ENCODE measurements at regions of chr6 and their contacts with region 1.

Region 1: GRCh38 chr6:137641474-137642077 is 147.4 kb upstream of the OLIG3 start:
- DNase-seq: peak; percentile 41 to 83 (median 64)
- ATAC-seq: peak; percentile 74
- H3K4me3 ChIP-seq: no peak overlapping the region
- H3K4me3 Mint-ChIP-seq: no peak overlapping the region
- H3K27ac ChIP-seq: no peak overlapping the region
- H3K27ac Mint-ChIP-seq: no peak overlapping the region
- H3K4me1 ChIP-seq: no peaks in the 10 kb centered on the region
- H3K4me1 Mint-ChIP-seq: peaks cover 13% of the 10 kb centered on the region
- H3K27me3 ChIP-seq: no peaks in the 10 kb centered on the region
- H3K27me3 Mint-ChIP-seq: peaks cover 2% of the 10 kb centered on the region
- CTCF ChIP-seq: peak; percentile 77

Region 2: DNA sequence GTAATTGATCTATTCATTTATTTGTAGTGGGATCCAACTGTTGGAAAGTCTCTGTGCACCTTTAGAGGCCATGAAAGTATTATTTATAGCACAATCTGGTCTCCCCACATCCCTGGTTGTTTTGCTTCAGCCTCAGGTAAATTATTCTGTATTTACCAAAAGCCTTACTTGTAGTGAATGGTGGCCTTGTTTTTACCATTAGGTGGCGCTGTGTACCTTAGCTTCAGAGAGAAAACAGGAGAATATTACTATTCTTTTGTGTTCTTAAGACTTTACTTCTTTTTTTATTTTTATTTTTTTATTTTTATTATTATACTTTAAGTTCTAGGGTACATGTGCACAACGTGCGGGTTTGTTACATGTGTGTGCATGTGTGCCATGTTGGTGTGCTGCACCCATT is 795.5 kb before region 1 on chr6:
- CTCF ChIA-PET with region 1: no interaction called
- POLR2A ChIA-PET with region 1: no interaction called
- intact Hi-C with region 1: loop called in 1 of 2 experiments (anchors 10 kb)
- DNase-seq: peak in 4 of 9 experiments; percentile 18 to 67 (median 39)
- ATAC-seq: peak; percentile 46
- H3K4me3 ChIP-seq: no peak overlapping the region
- H3K4me3 Mint-ChIP-seq: no peak overlapping the region
- H3K27ac ChIP-seq: no peak overlapping the region
- H3K27ac Mint-ChIP-seq: no peak overlapping the region
- H3K4me1 ChIP-seq: no peaks in the 10 kb centered on the region
- H3K4me1 Mint-ChIP-seq: peaks cover 3% of the 10 kb centered on the region
- H3K27me3 ChIP-seq: no peaks in the 10 kb centered on the region
- H3K27me3 Mint-ChIP-seq: no peaks in the 10 kb centered on the region
- CTCF ChIP-seq: peak; percentile 63

Region 3: GRCh38 chr6:136967876-136968752 is 673.5 kb before region 1 on chr6:
- CTCF ChIA-PET with region 1: no interaction called
- POLR2A ChIA-PET with region 1: no interaction called
- intact Hi-C with region 1: loop called in 1 of 2 experiments (anchors 1 kb)
- DNase-seq: peak; percentile 19 to 74 (median 60)
- ATAC-seq: peak; percentile 61
- H3K4me3 ChIP-seq: no peak overlapping the region
- H3K4me3 Mint-ChIP-seq: no peak overlapping the region
- H3K27ac ChIP-seq: no peak overlapping the region
- H3K27ac Mint-ChIP-seq: no peak overlapping the region
- H3K4me1 ChIP-seq: peaks cover 4% of the 10 kb centered on the region
- H3K4me1 Mint-ChIP-seq: no peaks in the 10 kb centered on the region
- H3K27me3 ChIP-seq: no peaks in the 10 kb centered on the region
- H3K27me3 Mint-ChIP-seq: peaks cover 32% of the 10 kb centered on the region
- CTCF ChIP-seq: peak; percentile 59

Region 4: DNA sequence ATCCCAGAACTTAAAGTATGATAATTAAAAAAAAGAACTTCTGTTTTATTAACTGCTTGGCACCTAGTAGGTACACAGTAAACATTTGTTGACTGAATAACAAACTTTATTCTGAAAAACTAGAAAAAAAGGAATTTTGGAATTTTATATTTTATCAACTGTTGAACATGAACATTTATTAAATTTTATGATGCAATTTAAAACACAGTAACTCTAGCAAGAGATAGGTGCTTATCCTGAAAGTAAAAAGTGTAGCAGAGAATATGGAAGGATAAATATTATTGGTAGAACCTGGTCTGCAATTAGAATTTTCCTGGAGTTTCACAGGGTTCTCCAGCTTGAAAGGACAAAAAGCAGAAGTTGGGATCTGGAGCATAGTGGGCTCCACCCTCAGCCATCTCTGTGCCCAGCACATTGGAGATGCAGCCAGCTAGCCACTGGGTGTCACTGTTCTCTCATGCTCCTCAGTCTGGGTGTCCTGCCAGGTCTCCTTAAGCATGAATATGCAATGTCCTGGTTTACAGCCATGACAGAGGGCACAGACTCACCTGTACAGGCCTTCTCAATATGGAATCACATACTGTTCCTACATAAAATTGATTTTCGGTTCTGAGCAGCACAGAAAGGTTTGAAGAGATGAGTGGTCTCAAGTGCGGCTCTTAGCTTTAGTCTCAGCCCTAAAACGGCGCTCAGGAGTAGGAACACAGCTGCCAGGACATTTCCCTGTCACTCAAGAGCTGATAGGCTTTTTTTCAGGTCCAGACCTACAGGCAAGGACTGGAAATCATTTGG is 565.1 kb before region 1 on chr6:
- CTCF ChIA-PET with region 1: interaction called, 5 read pairs
- POLR2A ChIA-PET with region 1: no interaction called
- intact Hi-C with region 1: loop called (anchors 1 to 2 kb)
- DNase-seq: peak; percentile 22 to 71 (median 47)
- ATAC-seq: peak; percentile 62
- H3K4me3 ChIP-seq: no peak overlapping the region
- H3K4me3 Mint-ChIP-seq: no peak overlapping the region
- H3K27ac ChIP-seq: no peak overlapping the region
- H3K27ac Mint-ChIP-seq: no peak overlapping the region
- H3K4me1 ChIP-seq: no peaks in the 10 kb centered on the region
- H3K4me1 Mint-ChIP-seq: no peaks in the 10 kb centered on the region
- H3K27me3 ChIP-seq: no peaks in the 10 kb centered on the region
- H3K27me3 Mint-ChIP-seq: peaks cover 16% of the 10 kb centered on the region
- CTCF ChIP-seq: peak; percentile 57

Region 5: GRCh38 chr6:137094411-137095008 is 547.1 kb before region 1 on chr6:
- CTCF ChIA-PET with region 1: interaction called, 5 read pairs
- POLR2A ChIA-PET with region 1: no interaction called
- intact Hi-C with region 1: loop called (anchors 1 kb)
- DNase-seq: peak; percentile 14 to 79 (median 54)
- ATAC-seq: peak; percentile 67
- H3K4me3 ChIP-seq: no peak overlapping the region
- H3K4me3 Mint-ChIP-seq: no peak overlapping the region
- H3K27ac ChIP-seq: no peak overlapping the region
- H3K27ac Mint-ChIP-seq: peak overlapping the region; percentile 37
- H3K4me1 ChIP-seq: no peaks in the 10 kb centered on the region
- H3K4me1 Mint-ChIP-seq: peaks cover 18% of the 10 kb centered on the region
- H3K27me3 ChIP-seq: no peaks in the 10 kb centered on the region
- H3K27me3 Mint-ChIP-seq: peaks cover 3% of the 10 kb centered on the region
- CTCF ChIP-seq: peak; percentile 71

Region 6: DNA sequence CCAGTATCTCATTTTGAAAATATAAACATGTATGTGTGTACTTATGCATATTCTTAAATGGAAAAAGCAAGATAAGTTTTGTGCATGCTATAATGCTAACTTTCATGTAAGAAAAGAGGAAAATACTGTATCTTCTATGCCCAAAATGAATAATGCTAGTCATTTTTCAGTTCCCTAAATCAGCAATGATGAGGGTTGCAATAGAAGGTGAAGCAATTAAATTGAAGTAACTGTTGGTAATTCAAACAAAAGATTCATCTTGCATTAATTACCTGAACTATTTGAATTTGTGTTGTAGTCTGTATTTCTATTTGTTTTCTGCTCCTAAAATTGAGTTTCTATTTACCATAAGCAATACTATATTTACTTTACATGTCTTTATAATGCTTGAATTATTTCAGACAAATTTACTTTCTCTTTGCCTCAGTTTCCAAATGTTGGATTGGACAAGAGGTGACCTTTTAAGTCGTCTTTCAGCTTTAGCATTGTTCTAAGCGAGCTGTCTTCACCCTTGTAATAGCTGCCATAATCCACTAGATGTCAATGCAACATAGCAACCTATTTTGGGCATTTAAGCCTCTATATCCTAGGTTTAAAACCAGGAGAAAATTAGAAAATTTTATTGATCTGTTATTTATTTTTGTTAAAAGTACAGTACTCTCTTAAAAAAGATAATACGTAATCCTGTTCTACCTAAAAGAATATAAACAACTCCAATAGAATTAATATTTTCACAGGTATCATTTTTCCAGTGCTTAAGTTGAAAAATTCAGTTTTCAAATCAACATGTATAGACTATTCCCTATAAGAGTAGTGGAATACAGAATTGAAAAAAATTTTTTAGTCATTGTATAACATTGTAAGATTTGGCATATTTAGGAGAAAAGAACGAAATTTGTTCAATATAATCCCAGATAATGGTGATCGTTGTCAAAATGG is 370.1 kb before region 1 on chr6:
- CTCF ChIA-PET with region 1: interaction called, 17 read pairs
- POLR2A ChIA-PET with region 1: no interaction called
- intact Hi-C with region 1: loop called (anchors 1 kb)
- DNase-seq: peak in 2 of 9 experiments; percentile 56 to 66
- ATAC-seq: peak; percentile 69
- H3K4me3 ChIP-seq: no peak overlapping the region
- H3K4me3 Mint-ChIP-seq: no peak overlapping the region
- H3K27ac ChIP-seq: no peak overlapping the region
- H3K27ac Mint-ChIP-seq: no peak overlapping the region
- H3K4me1 ChIP-seq: no peaks in the 10 kb centered on the region
- H3K4me1 Mint-ChIP-seq: peaks cover 17% of the 10 kb centered on the region
- H3K27me3 ChIP-seq: no peaks in the 10 kb centered on the region
- H3K27me3 Mint-ChIP-seq: peaks cover 2% of the 10 kb centered on the region
- CTCF ChIP-seq: peak; percentile 95

Region 7: GRCh38 chr6:137475103-137475502 is 166.5 kb before region 1 on chr6:
- CTCF ChIA-PET with region 1: interaction called, 4 read pairs
- POLR2A ChIA-PET with region 1: no interaction called
- intact Hi-C with region 1: loop called (anchors 2 to 5 kb)
- DNase-seq: peak in 2 of 9 experiments; percentile 15 to 34
- ATAC-seq: no peak
- H3K4me3 ChIP-seq: no peak overlapping the region
- H3K4me3 Mint-ChIP-seq: no peak overlapping the region
- H3K27ac ChIP-seq: no peak overlapping the region
- H3K27ac Mint-ChIP-seq: no peak overlapping the region
- H3K4me1 ChIP-seq: no peaks in the 10 kb centered on the region
- H3K4me1 Mint-ChIP-seq: no peaks in the 10 kb centered on the region
- H3K27me3 ChIP-seq: no peaks in the 10 kb centered on the region
- H3K27me3 Mint-ChIP-seq: peaks cover 21% of the 10 kb centered on the region
- CTCF ChIP-seq: no peak

Measured in CD8-positive, alpha-beta T cell (primary cell).